Activated CD8-positive, alpha-beta T cell treated with anti-CD3 and anti-CD28 coated beads, Interleukin-2, amount 10 ng/mL, durations not matched to agents 7 days and 5 days (primary cell): ENCODE measurements at regions of chr14 and their contacts with region 1.

Region 1: DNA sequence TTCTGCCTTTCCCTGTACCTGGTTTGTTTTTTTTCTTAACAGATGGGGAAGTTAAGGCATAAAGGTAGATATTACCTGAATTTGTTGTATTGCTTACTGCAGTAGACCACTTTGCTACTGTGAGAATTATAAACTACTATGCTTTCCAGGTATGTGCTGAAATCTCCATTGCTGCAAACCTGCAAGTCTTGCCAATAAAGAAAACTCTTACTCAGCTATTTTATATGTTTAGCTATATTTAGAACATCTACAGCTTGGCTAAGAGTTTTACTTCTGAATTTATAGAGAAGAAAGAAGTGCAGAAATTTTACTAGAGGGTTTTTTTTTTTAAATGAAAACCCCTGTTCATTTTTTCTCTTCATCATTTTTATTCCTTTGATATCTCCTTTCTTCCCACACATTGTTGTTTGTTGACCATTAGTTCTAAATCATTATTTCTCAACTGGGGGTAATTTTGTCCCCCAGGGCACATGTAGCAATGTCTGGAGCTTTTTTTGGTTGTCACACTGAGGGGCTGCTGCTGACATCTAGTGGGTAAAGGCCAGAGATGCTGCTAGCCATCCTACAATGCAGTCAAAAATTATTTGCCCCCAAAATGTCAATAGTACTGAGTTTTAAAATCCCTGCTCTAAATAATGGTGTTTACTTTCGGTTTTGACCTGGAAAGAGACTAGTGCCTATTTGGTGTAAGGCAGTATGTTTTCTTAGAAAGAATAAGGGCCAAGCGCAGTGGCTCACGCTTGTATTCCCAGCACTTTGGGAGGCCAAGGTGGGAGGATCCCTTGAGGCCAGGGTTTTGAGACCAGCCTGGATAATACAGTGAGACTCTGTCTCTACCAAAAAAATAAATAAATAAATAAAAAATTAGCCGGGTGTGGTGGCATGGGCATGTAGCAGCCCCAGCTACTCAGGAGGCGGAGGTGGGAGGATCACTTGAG is 48.6 kb downstream of the PCNX1 start:
- DNase-seq: peak; percentile 64
- ATAC-seq: peak; percentile 75
- H3K4me3 Mint-ChIP-seq: no peak overlapping the region
- H3K27ac Mint-ChIP-seq: no peak overlapping the region
- H3K4me1 Mint-ChIP-seq: peaks cover 23% of the 10 kb centered on the region
- H3K27me3 Mint-ChIP-seq: no peaks in the 10 kb centered on the region

Region 2: DNA sequence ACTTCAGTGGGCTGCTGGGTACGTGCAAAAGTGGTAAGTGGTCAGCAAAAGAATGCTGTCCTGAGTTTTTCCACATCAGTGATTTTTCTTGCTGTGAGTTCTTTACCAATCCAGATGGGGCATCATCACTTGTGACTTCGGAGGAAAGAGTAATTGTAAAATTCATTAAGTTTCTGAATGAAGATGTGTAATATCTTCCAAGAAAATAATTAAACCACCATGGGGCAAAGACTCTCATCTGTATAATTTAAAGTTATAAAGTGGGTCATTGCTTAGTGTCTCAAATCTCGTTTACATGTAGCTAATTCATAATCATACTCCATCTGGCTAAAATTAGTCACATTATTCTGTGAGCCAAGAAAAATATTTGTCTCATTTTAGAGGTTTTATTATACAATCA is 344.6 kb before region 1 on chr14:
- CTCF ChIA-PET with region 1: no interaction called
- POLR2A ChIA-PET with region 1: no interaction called
- DNase-seq: no peak
- ATAC-seq: no peak
- H3K4me3 Mint-ChIP-seq: no peak overlapping the region
- H3K27ac Mint-ChIP-seq: no peak overlapping the region
- H3K4me1 Mint-ChIP-seq: no peaks in the 10 kb centered on the region
- H3K27me3 Mint-ChIP-seq: peaks cover 7% of the 10 kb centered on the region

Region 3: DNA sequence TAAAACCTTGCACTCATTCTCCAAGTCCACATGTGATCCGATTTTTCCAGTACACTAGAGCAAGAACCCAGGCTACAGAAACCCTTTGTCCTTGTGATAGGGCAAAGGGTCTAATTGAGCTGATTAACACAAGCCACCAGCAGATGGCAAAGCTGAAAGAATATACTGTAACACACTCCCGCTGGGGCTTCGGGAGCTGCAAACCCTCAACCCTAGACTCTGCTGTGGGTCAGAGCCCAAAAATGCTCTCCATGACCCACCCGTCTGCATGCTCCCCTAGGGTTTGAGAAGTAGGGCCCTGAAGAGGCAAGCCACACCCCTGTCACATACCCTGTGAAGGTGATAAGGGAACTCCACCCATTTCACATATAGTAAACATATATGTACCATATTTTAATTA is 82.2 kb before region 1 on chr14:
- CTCF ChIA-PET with region 1: interaction called, 14 read pairs
- POLR2A ChIA-PET with region 1: no interaction called
- DNase-seq: peak; percentile 36
- ATAC-seq: peak; percentile 17
- H3K4me3 Mint-ChIP-seq: no peak overlapping the region
- H3K27ac Mint-ChIP-seq: peak overlapping the region; percentile 55
- H3K4me1 Mint-ChIP-seq: peaks cover 36% of the 10 kb centered on the region
- H3K27me3 Mint-ChIP-seq: no peaks in the 10 kb centered on the region

Region 4: GRCh38 chr14:70919774-70920173 is 36.0 kb before region 1 on chr14:
- CTCF ChIA-PET with region 1: interaction called, 20 read pairs
- POLR2A ChIA-PET with region 1: interaction called, 3 read pairs
- DNase-seq: no peak
- ATAC-seq: peak; percentile 32
- H3K4me3 Mint-ChIP-seq: peak overlapping the region; percentile 37
- H3K27ac Mint-ChIP-seq: peak overlapping the region; percentile 84
- H3K4me1 Mint-ChIP-seq: peaks cover 82% of the 10 kb centered on the region
- H3K27me3 Mint-ChIP-seq: no peaks in the 10 kb centered on the region

Region 5: DNA sequence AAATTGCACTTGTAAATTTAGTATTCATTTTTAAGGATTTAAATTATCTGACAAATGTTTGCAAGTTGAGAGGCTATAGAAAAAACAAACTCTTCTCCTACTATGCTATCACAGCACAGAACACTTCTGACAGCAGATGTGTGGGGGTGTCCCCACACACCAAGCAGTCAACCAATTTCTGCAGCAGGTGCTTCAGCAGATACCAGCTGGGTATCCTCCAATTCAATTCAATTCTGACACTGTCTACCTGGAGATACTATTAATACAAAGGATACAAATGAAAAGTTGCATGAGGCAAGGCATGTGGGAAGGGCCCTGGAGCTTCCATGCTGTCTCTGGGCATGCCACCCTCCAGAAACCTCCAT is 13.5 kb before region 1 on chr14:
- CTCF ChIA-PET with region 1: interaction called, 32 read pairs
- POLR2A ChIA-PET with region 1: interaction called, 4 read pairs
- DNase-seq: no peak
- ATAC-seq: no peak
- H3K4me3 Mint-ChIP-seq: no peak overlapping the region
- H3K27ac Mint-ChIP-seq: no peak overlapping the region
- H3K4me1 Mint-ChIP-seq: peaks cover 52% of the 10 kb centered on the region
- H3K27me3 Mint-ChIP-seq: no peaks in the 10 kb centered on the region

Region 6: DNA sequence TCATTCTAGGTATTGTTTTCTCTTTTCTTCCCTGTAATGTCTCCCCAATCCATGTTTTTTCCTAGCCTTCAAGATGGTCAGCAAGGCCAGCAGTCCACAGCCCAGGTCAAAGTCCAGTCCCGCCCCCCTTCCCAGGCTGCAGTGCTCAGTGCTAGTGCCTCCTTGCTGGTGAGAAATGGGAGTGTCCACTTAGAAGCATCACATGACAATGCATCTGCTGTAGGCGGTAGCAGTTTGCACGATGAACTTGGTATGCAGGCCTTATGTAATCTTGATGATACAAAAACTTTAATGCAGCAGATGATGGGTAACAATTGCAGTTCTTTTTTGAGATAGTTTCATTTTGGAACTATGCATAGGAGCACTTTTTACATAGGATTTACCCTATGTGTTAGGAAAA is 39.9 kb after region 1 on chr14:
- CTCF ChIA-PET with region 1: no interaction called
- POLR2A ChIA-PET with region 1: no interaction called
- DNase-seq: no peak
- ATAC-seq: no peak
- H3K4me3 Mint-ChIP-seq: no peak overlapping the region
- H3K27ac Mint-ChIP-seq: no peak overlapping the region
- H3K4me1 Mint-ChIP-seq: peaks cover 36% of the 10 kb centered on the region
- H3K27me3 Mint-ChIP-seq: no peaks in the 10 kb centered on the region